ENCODE measurements at regions of chr10 and their contacts with region 1.

Region 1: GRCh38 chr10:84537447-84537931 is 209.1 kb downstream of the CCSER2 start:
- DNase-seq: peak; percentile 78
- CTCF ChIP-seq: peak; percentile 59

Region 2: DNA sequence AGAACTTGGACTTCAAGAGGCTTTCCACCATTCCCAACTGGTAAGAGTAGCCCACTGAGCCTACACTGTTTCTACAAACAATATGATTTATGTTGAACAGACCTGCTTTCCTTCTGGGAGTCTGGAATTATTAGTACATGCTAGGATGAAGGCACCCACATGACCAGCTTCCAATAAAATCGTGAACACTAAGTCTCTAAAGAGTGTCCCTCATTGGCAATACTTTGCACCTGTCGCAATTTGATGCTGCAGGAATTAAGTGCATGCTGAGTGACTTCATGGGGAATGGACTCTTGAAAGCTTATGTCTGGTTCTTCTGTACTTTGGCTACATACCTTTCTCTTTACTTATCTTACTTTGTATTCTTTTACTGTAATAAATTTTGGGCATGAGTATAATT is 703.4 kb before region 1 on chr10:
- in situ Hi-C with region 1: no loop called
- DNase-seq: no peak
- CTCF ChIP-seq: no peak

Region 3: GRCh38 chr10:84264611-84265141 is 272.8 kb before region 1 on chr10:
- in situ Hi-C with region 1: loop called (anchors 10 kb)
- DNase-seq: peak; percentile 70
- CTCF ChIP-seq: peak; percentile 98

Region 4: GRCh38 chr10:84375011-84375410 is 162.5 kb before region 1 on chr10:
- in situ Hi-C with region 1: loop called (anchors 10 kb)
- DNase-seq: peak; percentile 22
- CTCF ChIP-seq: peak; percentile 72